Endothelial cell of umbilical vein (primary cell): ENCODE measurements at regions of chr3 and their contacts with region 1.

Region 1: DNA sequence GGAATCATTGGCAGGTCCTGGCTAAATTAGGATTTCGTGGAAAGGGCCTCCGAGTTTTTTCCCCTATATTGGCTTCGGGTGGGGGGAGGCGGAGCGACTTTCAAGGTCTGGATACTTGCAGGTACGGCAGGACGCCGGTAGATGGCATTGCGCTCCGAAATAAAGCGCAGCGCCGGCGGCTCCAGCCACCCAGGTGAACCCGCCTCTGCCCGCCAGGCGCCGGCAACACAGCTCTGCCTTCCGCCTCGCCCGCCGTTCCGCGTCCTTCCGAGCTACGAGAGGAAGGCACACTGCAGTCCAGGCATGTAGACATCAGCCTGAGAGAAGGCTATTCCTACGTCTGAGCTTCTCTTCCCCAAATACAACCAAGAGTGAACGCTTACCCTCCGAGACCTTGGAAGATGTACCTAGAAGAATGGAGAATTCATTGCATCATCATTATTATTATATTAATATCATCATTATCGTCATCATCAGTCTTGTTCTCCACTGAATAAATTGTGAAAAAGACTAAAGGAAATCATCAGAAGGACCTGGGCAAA is 514.1 kb downstream of the MECOM start:
- DNase-seq: peak; percentile 93
- H3K4me3 ChIP-seq: peak overlapping the region in 2 of 3 experiments; percentile 30 to 60
- H3K27ac ChIP-seq: peak overlapping the region; percentile 82
- H3K4me1 ChIP-seq: peaks cover 47% of the 10 kb centered on the region
- H3K27me3 ChIP-seq: no peaks in the 10 kb centered on the region
- CTCF ChIP-seq: peak; percentile 88 to 89
- POLR2A ChIP-seq: peak; percentile 71

Region 2: DNA sequence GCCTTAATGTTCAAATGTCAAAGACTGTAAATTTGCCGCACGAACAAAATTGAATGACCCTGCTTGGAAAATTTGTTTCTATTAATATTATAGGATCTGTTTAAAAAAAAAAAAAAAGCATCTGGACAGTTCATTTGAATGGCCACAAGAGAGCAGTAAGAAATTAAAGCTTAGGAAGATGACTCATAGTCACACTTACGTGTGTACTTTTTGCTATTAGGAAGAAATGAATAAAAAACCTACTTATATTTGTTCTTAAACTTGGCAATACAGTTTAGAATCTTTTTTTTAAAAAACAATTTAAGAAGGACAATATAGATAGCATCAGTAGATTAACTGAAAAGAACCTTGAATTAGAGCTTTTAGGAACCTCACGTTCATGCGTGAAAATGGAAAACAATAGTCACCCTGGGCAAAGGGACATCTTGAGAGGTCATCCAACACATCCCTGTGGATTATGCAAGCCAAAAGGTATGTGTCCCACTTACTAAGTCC is 107.7 kb before region 1 on chr3:
- CTCF ChIA-PET with region 1: interaction called, 7 read pairs
- POLR2A ChIA-PET with region 1: no interaction called
- dilution Hi-C with region 1: no loop called
- intact Hi-C with region 1: loop called (anchors 5 kb)
- DNase-seq: peak; percentile 87
- H3K4me3 ChIP-seq: no peak overlapping the region
- H3K27ac ChIP-seq: peak overlapping the region; percentile 48
- H3K4me1 ChIP-seq: peaks cover 27% of the 10 kb centered on the region
- H3K27me3 ChIP-seq: no peaks in the 10 kb centered on the region
- CTCF ChIP-seq: peak; percentile 23 to 29
- POLR2A ChIP-seq: no peak

Region 3: DNA sequence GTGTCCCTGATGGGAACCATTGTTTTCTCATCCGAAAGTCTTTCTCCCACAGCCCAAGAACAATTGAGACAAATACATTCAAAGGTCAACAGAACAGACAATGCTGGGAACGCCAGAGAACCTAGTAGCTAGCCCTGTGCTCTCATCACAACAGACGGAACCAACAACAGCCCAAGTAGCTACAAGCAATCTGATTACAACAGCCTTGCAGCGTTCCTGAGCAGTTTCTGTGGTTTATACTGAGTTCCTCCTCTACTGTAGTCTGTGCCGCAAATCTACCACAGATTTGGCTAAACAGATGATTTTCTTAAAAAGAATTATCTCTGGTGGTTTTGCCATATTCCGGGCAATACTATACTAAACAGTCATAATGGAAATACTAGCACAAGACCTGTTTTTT is 78.5 kb after region 1 on chr3:
- CTCF ChIA-PET with region 1: interaction called, 10 read pairs
- POLR2A ChIA-PET with region 1: no interaction called
- dilution Hi-C with region 1: no loop called
- intact Hi-C with region 1: no loop called
- DNase-seq: peak; percentile 88
- H3K4me3 ChIP-seq: no peak overlapping the region
- H3K27ac ChIP-seq: peak overlapping the region; percentile 3
- H3K4me1 ChIP-seq: peaks cover 27% of the 10 kb centered on the region
- H3K27me3 ChIP-seq: no peaks in the 10 kb centered on the region
- CTCF ChIP-seq: no peak
- POLR2A ChIP-seq: no peak

Region 4: GRCh38 chr3:169305460-169305859 is 156.0 kb after region 1 on chr3:
- CTCF ChIA-PET with region 1: interaction called, 12 read pairs
- POLR2A ChIA-PET with region 1: no interaction called
- dilution Hi-C with region 1: no loop called
- intact Hi-C with region 1: no loop called
- DNase-seq: no peak
- H3K4me3 ChIP-seq: no peak overlapping the region
- H3K27ac ChIP-seq: no peak overlapping the region
- H3K4me1 ChIP-seq: peaks cover 20% of the 10 kb centered on the region
- H3K27me3 ChIP-seq: no peaks in the 10 kb centered on the region
- CTCF ChIP-seq: no peak
- POLR2A ChIP-seq: no peak

Region 5: DNA sequence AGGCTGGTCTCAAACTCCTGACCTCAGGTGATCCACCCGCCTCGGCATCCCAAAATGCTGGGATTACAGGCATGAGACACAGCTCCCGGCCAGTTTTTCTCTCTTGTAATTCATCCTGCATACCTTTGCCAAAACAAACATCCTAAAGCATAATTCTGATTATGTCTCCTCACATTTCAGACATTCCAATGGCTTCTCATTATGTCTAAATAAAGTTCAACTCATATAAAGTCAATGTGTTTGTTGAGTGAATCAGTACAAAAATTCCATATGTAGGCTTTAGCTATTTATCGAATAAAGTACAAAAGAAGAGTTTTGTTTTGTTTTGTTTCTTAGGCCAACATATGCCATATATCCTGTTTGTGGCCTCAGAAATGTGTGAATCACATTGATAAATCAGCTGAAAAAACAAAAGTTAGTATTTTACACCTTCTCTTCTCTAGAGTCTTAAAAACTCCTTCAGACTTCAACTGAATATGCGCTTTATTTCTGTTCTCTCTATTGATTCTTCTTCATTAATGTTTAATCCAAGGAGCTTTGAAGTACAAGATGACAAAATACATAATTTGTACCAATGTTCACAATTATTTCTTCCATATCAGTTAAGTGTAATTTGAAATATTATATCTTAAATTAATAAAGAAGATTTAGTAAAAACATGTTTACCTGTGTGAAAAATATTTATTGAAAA is 348.3 kb after region 1 on chr3:
- CTCF ChIA-PET with region 1: interaction called, 6 read pairs
- POLR2A ChIA-PET with region 1: interaction called, 3 read pairs
- dilution Hi-C with region 1: no loop called
- intact Hi-C with region 1: loop called (anchors 1 kb)
- DNase-seq: peak; percentile 94
- H3K4me3 ChIP-seq: no peak overlapping the region
- H3K27ac ChIP-seq: peak overlapping the region; percentile 100
- H3K4me1 ChIP-seq: peaks cover 73% of the 10 kb centered on the region
- H3K27me3 ChIP-seq: no peaks in the 10 kb centered on the region
- CTCF ChIP-seq: no peak
- POLR2A ChIP-seq: no peak

Region 6: DNA sequence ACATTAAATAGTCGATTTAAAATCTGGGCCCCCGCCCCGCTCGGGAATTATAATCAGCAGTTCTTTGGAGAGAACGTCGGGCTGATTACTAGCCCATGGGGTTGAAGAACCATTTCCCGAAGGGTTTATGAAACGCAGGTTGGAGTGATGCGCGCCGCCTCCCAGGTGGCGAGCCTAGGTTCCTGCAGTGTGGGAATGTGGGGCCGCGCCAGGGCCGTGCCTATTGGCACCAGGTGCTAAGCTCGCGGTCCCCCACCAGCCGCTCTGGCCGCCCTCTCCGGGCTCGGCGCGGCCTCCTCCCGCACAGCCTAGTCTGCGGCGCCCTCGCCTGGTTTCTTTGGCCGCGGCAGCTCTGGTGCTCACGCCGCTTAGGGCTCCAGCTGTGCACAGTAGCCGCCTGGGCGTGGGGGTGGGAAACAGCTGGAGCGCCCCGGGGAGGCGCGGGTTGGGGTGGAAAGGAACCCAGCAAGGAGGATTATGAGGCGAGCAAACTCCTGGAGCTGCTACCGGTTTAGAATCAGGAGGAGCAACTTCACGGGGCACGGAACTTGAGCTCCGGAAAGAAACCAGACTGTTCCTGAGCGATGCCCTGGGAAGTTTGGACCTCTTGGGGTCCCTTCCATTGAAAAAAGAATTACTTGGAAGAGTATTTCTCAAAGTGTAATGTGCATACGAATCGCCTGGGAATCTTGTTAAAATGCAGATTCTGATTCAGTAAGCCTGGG is 519.7 kb after region 1 on chr3:
- CTCF ChIA-PET with region 1: interaction called, 206 read pairs
- POLR2A ChIA-PET with region 1: interaction called, 8 read pairs
- dilution Hi-C with region 1: no loop called
- intact Hi-C with region 1: loop called (anchors 1 kb)
- DNase-seq: peak; percentile 84
- H3K4me3 ChIP-seq: peak overlapping the region; percentile 45 to 77 (median 70)
- H3K27ac ChIP-seq: peak overlapping the region; percentile 51
- H3K4me1 ChIP-seq: peaks cover 42% of the 10 kb centered on the region
- H3K27me3 ChIP-seq: no peaks in the 10 kb centered on the region
- CTCF ChIP-seq: peak; percentile 94
- POLR2A ChIP-seq: no peak